Gastrocnemius medialis (tissue), 4 donors: ENCODE measurements at regions of chr16 and their contacts with region 1.

Region 1: GRCh38 chr16:83689385-83689831 is 118.4 kb upstream of the HSBP1 start:
- DNase-seq: peak; percentile 59
- ATAC-seq: peak; percentile 98 to 99
- H3K4me3 ChIP-seq: no peak overlapping the region
- H3K27ac ChIP-seq: peak overlapping the region in 3 of 4 donors; percentile 35 to 70 (median 48)
- H3K4me1 ChIP-seq: peaks cover 20 to 29% of the 10 kb centered on the region in 2 donors
- H3K27me3 ChIP-seq: no peaks in the 10 kb centered on the region
- CTCF ChIP-seq: no peak
- POLR2A ChIP-seq: no peak

Region 2: GRCh38 chr16:83095941-83096692 is 593.3 kb before region 1 on chr16:
- in situ Hi-C with region 1: no loop called
- intact Hi-C with region 1: no loop called
- DNase-seq: no peak
- ATAC-seq: peak in 1 of 2 donors; percentile 45
- H3K4me3 ChIP-seq: no peak overlapping the region
- H3K27ac ChIP-seq: no peak overlapping the region
- H3K4me1 ChIP-seq: no peaks in the 10 kb centered on the region
- H3K27me3 ChIP-seq: no peaks in the 10 kb centered on the region
- CTCF ChIP-seq: no peak
- POLR2A ChIP-seq: no peak

Region 3: GRCh38 chr16:83651871-83652270 is 37.5 kb before region 1 on chr16:
- in situ Hi-C with region 1: no loop called
- intact Hi-C with region 1: no loop called
- DNase-seq: no peak
- ATAC-seq: no peak
- H3K4me3 ChIP-seq: no peak overlapping the region
- H3K27ac ChIP-seq: no peak overlapping the region
- H3K4me1 ChIP-seq: no peaks in the 10 kb centered on the region
- H3K27me3 ChIP-seq: no peaks in the 10 kb centered on the region
- CTCF ChIP-seq: no peak
- POLR2A ChIP-seq: no peak

Region 4: GRCh38 chr16:83722501-83723183 is 33.2 kb after region 1 on chr16:
- in situ Hi-C with region 1: no loop called
- intact Hi-C with region 1: loop called (anchors 5 kb)
- DNase-seq: peak; percentile 56 to 76
- ATAC-seq: peak; percentile 95
- H3K4me3 ChIP-seq: no peak overlapping the region
- H3K27ac ChIP-seq: peak overlapping the region; percentile 58 to 73 (median 69)
- H3K4me1 ChIP-seq: peaks cover 16 to 25% of the 10 kb centered on the region in 2 donors
- H3K27me3 ChIP-seq: no peaks in the 10 kb centered on the region
- CTCF ChIP-seq: no peak
- POLR2A ChIP-seq: no peak

Region 5: GRCh38 chr16:83807710-83808572 is 118.5 kb after region 1 on chr16 and contains the start of gene HSBP1:
- in situ Hi-C with region 1: no loop called
- intact Hi-C with region 1: loop called (anchors 5 kb)
- DNase-seq: peak; percentile 89 to 94
- ATAC-seq: peak; percentile 96
- H3K4me3 ChIP-seq: peak within 1 kb of the TSS; percentile 85 to 96 (median 90)
- H3K27ac ChIP-seq: peak within 1 kb of the TSS; percentile 73 to 86 (median 84)
- H3K4me1 ChIP-seq: peaks cover 10 to 17% of the 10 kb centered on the region in 2 donors
- H3K27me3 ChIP-seq: no peaks in the 10 kb centered on the region
- CTCF ChIP-seq: peak in 2 of 5 experiments; percentile 13 to 20
- POLR2A ChIP-seq: peak; percentile 68
- total RNA-seq, gene HSBP1: 7.5 to 28.0 (median 8.7) TPM

Region 6: DNA sequence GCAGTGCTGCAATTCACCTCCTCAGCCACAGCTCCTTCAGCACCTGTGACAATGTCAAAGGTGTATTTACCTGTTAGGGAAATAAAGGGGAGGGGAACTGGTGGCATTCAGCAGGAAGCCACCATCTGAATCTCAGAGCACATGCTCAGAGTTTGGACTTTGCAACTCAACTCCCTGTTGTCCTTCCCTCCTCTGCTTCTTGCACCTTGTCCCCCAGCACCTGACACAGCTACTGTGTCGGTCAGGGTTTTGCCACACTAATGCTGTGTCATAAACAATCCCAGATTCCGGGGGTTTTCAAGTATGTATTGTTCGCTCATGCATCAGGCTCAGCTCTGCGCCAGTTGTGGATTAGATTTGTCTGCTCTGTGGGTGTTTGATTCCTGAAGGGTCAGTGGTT is 162.1 kb after region 1 on chr16:
- in situ Hi-C with region 1: no loop called
- intact Hi-C with region 1: no loop called
- DNase-seq: no peak
- ATAC-seq: no peak
- H3K4me3 ChIP-seq: no peak overlapping the region
- H3K27ac ChIP-seq: no peak overlapping the region
- H3K4me1 ChIP-seq: no peaks in the 10 kb centered on the region
- H3K27me3 ChIP-seq: no peaks in the 10 kb centered on the region
- CTCF ChIP-seq: no peak
- POLR2A ChIP-seq: no peak